BJ (cell line): ENCODE measurements at regions of chr12 and their contacts with region 1.

Region 1: GRCh38 chr12:47837190-47838171 is 17.8 kb upstream of the HDAC7 start:
- DNase-seq: no peak
- H3K4me3 ChIP-seq: no peak overlapping the region
- H3K27me3 ChIP-seq: no peaks in the 10 kb centered on the region
- CTCF ChIP-seq: peak; percentile 81

Region 2: GRCh38 chr12:47715393-47715876 is 122.0 kb before region 1 on chr12:
- CTCF ChIA-PET with region 1: interaction called, 139 read pairs
- POLR2A ChIA-PET with region 1: no interaction called
- DNase-seq: no peak
- H3K4me3 ChIP-seq: no peak overlapping the region
- H3K27me3 ChIP-seq: no peaks in the 10 kb centered on the region
- CTCF ChIP-seq: peak; percentile 80

Region 3: GRCh38 chr12:47742253-47742825 is 95.1 kb before region 1 on chr12:
- CTCF ChIA-PET with region 1: interaction called, 248 read pairs
- POLR2A ChIA-PET with region 1: no interaction called
- DNase-seq: no peak
- H3K4me3 ChIP-seq: no peak overlapping the region
- H3K27me3 ChIP-seq: peaks cover 6% of the 10 kb centered on the region
- CTCF ChIP-seq: peak; percentile 99

Region 4: GRCh38 chr12:47767216-47767724 is 70.2 kb before region 1 on chr12:
- CTCF ChIA-PET with region 1: interaction called, 36 read pairs
- POLR2A ChIA-PET with region 1: no interaction called
- DNase-seq: no peak
- H3K4me3 ChIP-seq: no peak overlapping the region
- H3K27me3 ChIP-seq: no peaks in the 10 kb centered on the region; the same call in 1 of the 2 replicates
- CTCF ChIP-seq: peak; percentile 59

Region 5: DNA sequence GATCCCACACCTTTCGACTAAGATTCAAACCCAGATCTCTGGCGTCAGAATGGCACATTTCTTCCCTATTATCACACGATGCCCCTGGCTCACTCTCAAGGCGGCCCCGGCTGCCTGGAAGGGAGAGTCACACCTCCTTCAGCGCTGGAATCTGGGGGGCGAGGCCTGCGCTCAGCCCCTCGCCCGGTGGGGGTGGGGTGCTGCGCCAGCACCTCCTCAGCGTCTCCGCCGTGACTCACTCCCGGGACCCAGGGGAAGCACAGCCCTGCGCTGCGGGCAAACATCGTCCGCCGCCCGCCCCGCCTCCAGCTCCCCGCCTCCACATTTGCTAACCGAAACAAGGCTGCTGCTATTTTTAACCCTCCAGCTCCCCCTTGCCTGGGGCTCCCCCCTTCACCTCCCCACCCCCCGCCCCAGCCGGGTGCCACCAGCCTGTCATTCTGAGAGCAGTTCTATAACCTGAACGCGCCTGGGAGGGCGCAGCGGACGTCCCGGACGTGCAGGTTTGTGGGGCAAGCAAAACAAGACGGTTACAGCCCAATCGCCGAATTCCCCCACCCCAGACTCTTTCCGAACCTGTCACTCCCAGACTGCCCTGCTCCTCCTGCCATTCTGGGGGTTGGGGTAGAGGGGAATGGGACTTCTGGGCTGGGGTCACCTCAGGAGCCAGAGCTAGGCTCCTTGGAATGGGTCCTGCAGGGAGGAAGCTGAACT is 24.5 kb before region 1 on chr12:
- CTCF ChIA-PET with region 1: interaction called, 174 read pairs
- POLR2A ChIA-PET with region 1: interaction called, 4 read pairs
- DNase-seq: peak; percentile 59
- H3K4me3 ChIP-seq: peak overlapping the region; percentile 18
- H3K27me3 ChIP-seq: no peaks in the 10 kb centered on the region
- CTCF ChIP-seq: no peak

Region 6: DNA sequence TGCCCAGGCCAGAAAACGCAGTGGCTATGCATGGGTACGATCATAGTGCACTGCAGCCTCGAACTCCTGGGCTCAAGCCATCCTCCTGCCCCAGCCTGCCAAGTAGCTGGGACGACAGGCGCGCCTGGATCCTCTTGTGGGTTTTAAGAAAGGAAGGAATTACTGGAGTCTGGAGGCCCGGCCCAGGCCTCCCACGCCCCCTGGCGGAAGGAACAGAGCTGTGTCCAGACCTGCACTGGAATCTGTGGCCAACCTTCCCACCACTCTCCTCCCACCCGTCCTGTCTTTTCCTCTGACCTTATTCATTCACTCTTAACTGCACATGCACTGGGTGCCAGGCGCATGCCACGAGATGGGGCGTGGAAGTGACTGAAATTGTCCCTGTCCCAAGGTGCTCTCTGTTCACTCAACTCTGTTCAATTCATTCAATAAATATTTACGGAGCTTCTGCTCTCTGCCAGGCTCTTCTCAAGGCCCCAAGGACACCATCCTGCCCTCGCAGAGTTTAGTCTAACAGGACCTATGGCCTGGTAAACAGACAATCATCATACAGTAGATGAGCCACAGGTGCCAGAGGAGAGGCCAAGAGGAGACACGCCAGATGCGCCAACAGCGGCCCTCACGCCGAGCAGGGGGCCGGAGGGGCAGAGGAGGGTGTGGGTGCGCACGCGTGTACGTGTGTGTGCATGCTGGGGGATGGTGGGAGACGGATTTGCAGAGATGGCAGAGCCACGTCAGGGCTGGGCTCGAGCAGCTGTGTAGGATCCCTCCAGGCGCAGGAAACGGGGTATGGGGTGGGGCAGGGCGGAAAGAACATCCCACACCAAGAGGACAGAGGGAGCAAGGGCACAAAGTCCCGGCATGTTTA is 112.2 kb after region 1 on chr12:
- CTCF ChIA-PET with region 1: interaction called, 36 read pairs
- POLR2A ChIA-PET with region 1: no interaction called
- DNase-seq: no peak
- H3K4me3 ChIP-seq: no peak overlapping the region
- H3K27me3 ChIP-seq: no peaks in the 10 kb centered on the region
- CTCF ChIP-seq: peak; percentile 95